ENCODE measurements at regions of chr2 and their contacts with region 1.

Region 1: GRCh38 chr2:105114551-105114950 is 76.7 kb downstream of the MRPS9 start:
- DNase-seq: no peak
- H3K4me3 ChIP-seq: no peak overlapping the region
- H3K27ac ChIP-seq: no peak overlapping the region
- H3K4me1 ChIP-seq: no peaks in the 10 kb centered on the region
- H3K27me3 ChIP-seq: no peaks in the 10 kb centered on the region
- CTCF ChIP-seq: peak; percentile 58 to 88 (median 73)
- EP300 ChIP-seq: no peak
- POLR2A ChIP-seq: no peak

Region 2: GRCh38 chr2:105235388-105236054 is 121.0 kb after region 1 on chr2:
- in situ Hi-C with region 1: loop called (anchors 5 to 10 kb)
- intact Hi-C with region 1: loop called (anchors 5 kb)
- DNase-seq: peak; percentile 76
- H3K4me3 ChIP-seq: no peak overlapping the region
- H3K27ac ChIP-seq: no peak overlapping the region
- H3K4me1 ChIP-seq: peaks cover 0 to 3% (median 0%) of the 10 kb centered on the region in 4 donors
- H3K27me3 ChIP-seq: no peaks in the 10 kb centered on the region
- CTCF ChIP-seq: peak; percentile 58 to 70 (median 67)
- EP300 ChIP-seq: no peak
- POLR2A ChIP-seq: no peak

Region 3: GRCh38 chr2:105243961-105244360 is 129.4 kb after region 1 on chr2:
- in situ Hi-C with region 1: loop called (anchors 5 to 10 kb)
- intact Hi-C with region 1: loop called (anchors 5 kb)
- DNase-seq: no peak
- H3K4me3 ChIP-seq: no peak overlapping the region
- H3K27ac ChIP-seq: no peak overlapping the region
- H3K4me1 ChIP-seq: no peaks in the 10 kb centered on the region
- H3K27me3 ChIP-seq: no peaks in the 10 kb centered on the region
- CTCF ChIP-seq: no peak
- EP300 ChIP-seq: no peak
- POLR2A ChIP-seq: no peak

Region 4: DNA sequence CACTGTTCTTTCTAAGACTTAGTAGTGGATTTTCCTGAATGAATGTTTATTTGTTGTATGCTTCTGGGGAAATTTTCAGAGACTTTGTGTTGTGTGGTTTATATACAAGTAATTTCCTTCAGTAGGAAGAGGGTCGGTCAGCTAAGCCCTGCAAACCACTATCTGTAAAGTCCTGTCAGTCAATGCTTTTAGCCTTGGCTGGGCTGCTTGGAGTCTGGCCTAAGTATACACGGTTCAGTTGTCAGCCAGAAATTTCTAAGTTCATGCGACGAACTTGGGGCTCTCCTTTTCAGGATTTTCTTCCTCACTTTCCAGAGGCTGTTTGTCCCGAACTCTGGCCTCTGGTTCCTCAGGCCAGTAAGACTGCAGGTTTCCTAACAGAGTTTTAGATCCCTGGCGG is 244.0 kb after region 1 on chr2:
- in situ Hi-C with region 1: no loop called
- intact Hi-C with region 1: no loop called
- DNase-seq: no peak
- H3K4me3 ChIP-seq: no peak overlapping the region
- H3K27ac ChIP-seq: no peak overlapping the region
- H3K4me1 ChIP-seq: no peaks in the 10 kb centered on the region
- H3K27me3 ChIP-seq: no peaks in the 10 kb centered on the region
- CTCF ChIP-seq: no peak
- EP300 ChIP-seq: no peak
- POLR2A ChIP-seq: no peak

Region 5: DNA sequence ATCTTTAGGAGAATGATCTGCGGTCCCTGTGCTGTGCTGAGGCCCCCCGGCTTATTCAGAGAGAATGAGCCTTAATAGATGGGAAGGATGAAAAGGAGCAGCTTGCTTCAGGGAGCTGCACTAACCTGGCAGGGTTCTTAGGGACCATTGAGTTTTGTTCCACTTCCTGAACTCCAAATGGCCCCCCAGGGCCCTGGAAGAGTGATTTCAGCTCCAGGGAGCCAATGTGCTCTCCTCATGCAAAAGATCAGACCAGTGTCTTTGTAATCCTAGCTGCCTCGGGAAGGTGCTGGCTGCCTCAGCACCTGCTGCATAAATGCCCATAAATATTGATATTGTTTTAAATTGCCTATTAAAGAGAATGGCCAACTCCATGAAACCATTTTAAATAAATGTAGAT is 840.3 kb after region 1 on chr2:
- in situ Hi-C with region 1: no loop called
- intact Hi-C with region 1: no loop called
- DNase-seq: no peak
- H3K4me3 ChIP-seq: no peak overlapping the region
- H3K27ac ChIP-seq: no peak overlapping the region
- H3K4me1 ChIP-seq: peaks cover 0 to 4% (median 0%) of the 10 kb centered on the region in 4 donors
- H3K27me3 ChIP-seq: no peaks in the 10 kb centered on the region
- CTCF ChIP-seq: no peak
- EP300 ChIP-seq: no peak
- POLR2A ChIP-seq: no peak

Measured in transverse colon (tissue), 4 donors.